Lower lobe of right lung (tissue), 2 donors: ENCODE measurements at regions of chr4 and their contacts with region 1.

Region 1: DNA sequence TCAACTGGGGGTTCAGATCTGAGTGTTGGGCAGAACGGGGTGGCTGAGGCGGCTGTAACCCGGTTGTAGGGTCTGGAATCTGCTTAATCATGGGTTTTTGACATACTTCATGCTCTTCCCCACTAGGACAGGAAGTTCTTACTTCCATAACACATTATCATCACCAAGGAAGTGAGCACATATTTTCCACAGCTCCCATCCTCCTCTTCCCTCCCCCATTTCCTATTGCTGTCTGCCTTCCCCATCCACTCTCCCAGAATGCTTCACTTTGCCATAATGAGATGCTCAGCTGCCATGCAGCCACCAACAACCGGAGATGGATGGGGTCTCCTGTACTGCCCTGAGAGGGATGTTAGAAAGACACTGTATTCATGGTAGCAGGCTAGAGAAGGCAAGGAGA is 6.4 kb upstream of the DCUN1D4 start:
- DNase-seq: no peak
- ATAC-seq: peak in 1 of 2 donors; percentile 19
- H3K4me3 ChIP-seq: no peak overlapping the region
- H3K27ac ChIP-seq: no peak overlapping the region
- H3K4me1 ChIP-seq: no peaks in the 10 kb centered on the region
- H3K27me3 ChIP-seq: no peaks in the 10 kb centered on the region
- CTCF ChIP-seq: no peak

Region 2: DNA sequence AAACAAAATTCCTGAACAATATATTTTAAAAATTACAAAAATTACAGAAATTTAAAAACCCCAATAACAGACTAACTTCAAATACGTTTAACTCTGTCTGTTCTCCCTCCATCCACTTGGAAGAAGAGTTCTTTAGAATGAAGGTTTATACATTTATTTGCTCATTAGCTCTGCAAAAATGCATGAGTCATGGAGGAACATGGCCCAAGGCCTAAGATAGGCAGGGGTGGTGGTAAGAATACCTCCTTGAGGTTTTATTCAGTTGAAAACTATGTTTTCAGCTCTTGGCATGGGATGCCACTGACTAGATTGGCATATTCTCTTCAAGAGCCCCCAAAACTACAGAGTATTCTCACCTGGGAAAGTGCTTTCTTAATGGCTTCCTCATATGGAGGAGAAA is 192.4 kb after region 1 on chr4:
- intact Hi-C with region 1: loop called (anchors 5 kb)
- DNase-seq: no peak
- ATAC-seq: no peak
- H3K4me3 ChIP-seq: no peak overlapping the region
- H3K27ac ChIP-seq: no peak overlapping the region
- H3K4me1 ChIP-seq: no peaks in the 10 kb centered on the region
- H3K27me3 ChIP-seq: no peaks in the 10 kb centered on the region
- CTCF ChIP-seq: no peak